Pancreas (tissue), 10 donors: ENCODE measurements at regions of chr3 and their contacts with region 1.

Region 1: DNA sequence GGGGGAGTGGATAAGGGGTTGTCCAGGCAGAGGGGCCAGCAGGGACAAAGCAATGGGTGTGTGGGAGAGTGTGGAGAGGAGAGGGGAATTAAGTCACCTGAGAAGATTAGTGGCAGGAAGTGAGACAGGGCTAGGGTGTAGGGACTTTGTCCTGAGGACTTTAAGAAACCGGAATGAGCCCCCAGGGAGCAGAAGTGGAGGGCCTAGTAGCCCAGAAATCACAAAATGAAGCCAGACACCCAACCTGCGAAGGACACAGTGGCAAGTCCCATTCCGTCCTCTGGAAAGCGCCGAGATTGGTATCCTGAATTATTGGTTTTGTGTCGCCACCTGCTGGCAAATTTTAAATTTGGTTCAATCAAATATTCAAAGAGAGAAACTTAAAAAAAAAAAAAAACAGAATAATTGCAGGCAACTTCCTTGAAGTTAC is 78.0 kb upstream of the SLC25A36 start:
- DNase-seq: peak in 4 of 6 donors; percentile 27 to 71 (median 38)
- ATAC-seq: peak; percentile 77 to 87 (median 82)
- H3K4me3 ChIP-seq: no peak overlapping the region
- H3K27ac ChIP-seq: no peak overlapping the region
- H3K4me1 ChIP-seq: no peaks in the 10 kb centered on the region
- H3K27me3 ChIP-seq: no peaks in the 10 kb centered on the region
- CTCF ChIP-seq: peak; percentile 14 to 41 (median 32)

Region 2: DNA sequence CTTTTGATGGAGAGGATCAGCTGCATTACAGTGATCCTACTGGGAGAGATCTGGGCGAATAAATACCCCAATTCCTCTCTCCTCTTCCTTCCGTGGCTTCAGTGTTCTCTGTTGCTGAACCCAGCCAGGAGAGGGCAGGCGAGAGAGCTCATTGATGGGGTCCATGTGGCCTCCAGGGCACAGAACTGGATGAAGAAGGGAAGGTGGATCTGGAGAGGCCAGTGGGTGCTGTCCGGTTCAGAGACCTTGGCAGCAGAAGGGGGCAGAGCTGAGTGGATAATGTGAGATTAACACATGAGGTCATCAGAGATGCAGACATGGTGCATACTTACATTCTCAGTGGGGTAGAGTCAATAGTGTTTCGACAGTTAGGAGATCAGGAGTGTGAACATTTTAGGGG is 735.0 kb before region 1 on chr3:
- intact Hi-C with region 1: loop called in 1 of 3 experiments (anchors 5 kb)
- DNase-seq: peak; percentile 18 to 66 (median 45)
- ATAC-seq: peak; percentile 53 to 87 (median 70)
- H3K4me3 ChIP-seq: no peak overlapping the region
- H3K27ac ChIP-seq: no peak overlapping the region
- H3K4me1 ChIP-seq: no peaks in the 10 kb centered on the region
- H3K27me3 ChIP-seq: no peaks in the 10 kb centered on the region
- CTCF ChIP-seq: peak in 3 of 4 donors; percentile 15 to 41 (median 39)